CD8-positive, alpha-beta T cell (primary cell): ENCODE measurements at regions of chr10 and their contacts with region 1.

Region 1: GRCh38 chr10:102245101-102245931 is at the start of gene GBF1:
- DNase-seq: peak; percentile 75 to 98 (median 87)
- ATAC-seq: peak; percentile 84
- H3K4me3 ChIP-seq: peak within 1 kb of the TSS; percentile 82 to 95
- H3K4me3 Mint-ChIP-seq: peak within 1 kb of the TSS; percentile 94
- H3K27ac ChIP-seq: peak within 1 kb of the TSS; percentile 89 to 93
- H3K27ac Mint-ChIP-seq: peak within 1 kb of the TSS; percentile 92
- H3K4me1 ChIP-seq: peaks cover 44% of the 10 kb centered on the region
- H3K4me1 Mint-ChIP-seq: peaks cover 54% of the 10 kb centered on the region
- H3K27me3 ChIP-seq: peaks cover 10 to 22% of the 10 kb centered on the region in 2 experiments
- H3K27me3 Mint-ChIP-seq: peaks cover 19% of the 10 kb centered on the region
- CTCF ChIP-seq: no peak
- total RNA-seq, gene GBF1: 26.7 to 31.3 TPM

Region 2: DNA sequence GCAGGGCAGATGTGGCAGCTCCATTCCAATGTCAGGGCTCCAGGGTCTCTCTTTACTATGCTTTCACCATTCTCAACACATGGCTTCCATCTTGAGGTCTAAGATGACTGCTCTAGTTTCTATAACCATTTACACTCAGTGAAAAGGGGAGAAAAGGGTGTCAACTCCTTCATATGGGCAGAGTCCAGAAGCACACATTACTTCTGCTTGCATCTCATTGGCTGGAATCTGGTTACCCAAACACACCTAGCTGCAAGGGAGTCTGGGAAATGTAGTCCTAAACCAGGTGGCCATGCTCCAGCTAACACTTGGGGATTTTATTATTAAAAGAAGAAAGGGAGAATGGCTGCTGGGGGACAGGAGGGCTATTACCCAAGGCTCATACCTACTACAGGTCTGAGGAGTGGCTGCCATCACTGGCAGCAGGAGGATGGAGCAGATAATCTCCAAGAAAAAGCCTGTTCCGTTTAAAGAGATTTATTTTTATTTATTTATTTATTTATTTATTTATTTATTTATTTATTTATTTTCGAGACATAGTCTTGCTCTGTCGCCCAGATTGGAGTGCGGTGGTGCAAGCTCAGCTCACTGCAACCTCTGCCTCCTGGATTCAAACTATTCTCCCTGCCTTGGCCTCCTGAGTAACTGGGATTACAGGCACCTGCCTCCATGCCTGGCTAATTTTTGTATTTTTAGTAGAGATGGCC is 987.0 kb before region 1 on chr10:
- CTCF ChIA-PET with region 1: no interaction called
- POLR2A ChIA-PET with region 1: no interaction called
- intact Hi-C with region 1: no loop called
- DNase-seq: no peak
- ATAC-seq: no peak
- H3K4me3 ChIP-seq: no peak overlapping the region
- H3K4me3 Mint-ChIP-seq: no peak overlapping the region
- H3K27ac ChIP-seq: no peak overlapping the region
- H3K27ac Mint-ChIP-seq: no peak overlapping the region
- H3K4me1 ChIP-seq: no peaks in the 10 kb centered on the region
- H3K4me1 Mint-ChIP-seq: no peaks in the 10 kb centered on the region
- H3K27me3 ChIP-seq: peaks cover 3 to 4% of the 10 kb centered on the region in 2 experiments
- H3K27me3 Mint-ChIP-seq: peaks cover 49% of the 10 kb centered on the region
- CTCF ChIP-seq: no peak

Region 3: GRCh38 chr10:102120142-102120990 is 125.0 kb before region 1 on chr10 and contains the start of gene LDB1:
- CTCF ChIA-PET with region 1: no interaction called
- POLR2A ChIA-PET with region 1: no interaction called
- intact Hi-C with region 1: loop called in 1 of 2 experiments (anchors 1 kb)
- DNase-seq: peak; percentile 40 to 91 (median 70)
- ATAC-seq: peak; percentile 45
- H3K4me3 ChIP-seq: peak within 1 kb of the TSS; percentile 84 to 94
- H3K4me3 Mint-ChIP-seq: peak within 1 kb of the TSS; percentile 90
- H3K27ac ChIP-seq: peak within 1 kb of the TSS; percentile 97 to 98
- H3K27ac Mint-ChIP-seq: peak within 1 kb of the TSS; percentile 98
- H3K4me1 ChIP-seq: peaks cover 51% of the 10 kb centered on the region
- H3K4me1 Mint-ChIP-seq: peaks cover 55% of the 10 kb centered on the region
- H3K27me3 ChIP-seq: no peaks in the 10 kb centered on the region
- H3K27me3 Mint-ChIP-seq: no peaks in the 10 kb centered on the region
- CTCF ChIP-seq: no peak
- total RNA-seq, gene LDB1: 113 to 124 TPM

Region 4: DNA sequence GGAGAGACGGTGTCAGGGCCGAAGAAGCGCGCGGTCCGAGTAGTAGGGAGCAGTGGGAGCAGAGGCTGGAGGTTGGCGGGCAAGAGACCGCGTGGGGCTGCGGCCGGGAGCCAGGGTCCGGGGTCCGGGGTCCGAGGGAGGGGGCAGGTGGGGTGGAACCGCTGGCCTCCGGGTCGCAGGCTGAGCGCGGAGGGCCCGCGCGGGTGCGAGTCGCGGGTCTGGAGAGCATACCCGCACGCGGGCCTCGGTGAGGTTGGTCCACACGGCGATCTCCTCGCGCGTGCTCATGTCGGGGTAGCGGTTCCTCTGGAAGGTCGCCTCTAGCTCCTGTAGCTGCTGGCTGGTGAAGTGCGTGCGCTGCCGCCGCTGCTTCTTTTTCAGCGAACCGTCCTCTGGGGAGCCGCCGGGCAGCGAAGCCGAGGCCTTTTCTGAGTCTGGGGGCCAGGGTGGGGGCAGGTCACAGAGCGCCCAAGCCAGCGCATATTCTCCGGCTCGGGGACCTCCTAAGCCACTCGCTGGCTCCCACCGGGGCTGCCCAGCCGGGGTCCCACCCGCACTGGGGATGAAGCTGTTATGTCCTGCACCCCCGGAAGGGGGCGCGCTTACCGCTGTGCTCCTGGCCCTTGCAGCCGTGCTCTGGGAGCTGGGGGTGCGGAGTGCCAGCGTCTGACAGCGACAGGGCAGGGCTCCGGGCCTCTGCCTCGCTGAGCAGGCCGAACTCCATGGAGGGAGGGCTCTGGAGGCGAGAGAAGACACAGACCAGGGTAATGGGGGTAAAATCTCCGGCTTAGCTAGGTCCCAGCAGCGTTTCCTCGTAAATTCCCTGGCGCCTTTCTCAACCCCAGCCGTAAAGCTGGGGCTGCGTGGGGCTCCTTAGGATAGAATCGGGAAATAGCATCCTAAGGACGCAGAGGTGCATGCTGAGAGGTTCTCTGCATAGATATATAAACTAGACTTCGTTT is 13.7 kb before region 1 on chr10:
- CTCF ChIA-PET with region 1: interaction called, 92 read pairs
- POLR2A ChIA-PET with region 1: interaction called, 16 read pairs
- intact Hi-C with region 1: loop called in 1 of 2 experiments (anchors 1 kb)
- DNase-seq: peak in 8 of 9 experiments; percentile 34 to 81 (median 68)
- ATAC-seq: peak; percentile 74
- H3K4me3 ChIP-seq: peak overlapping the region; percentile 51
- H3K4me3 Mint-ChIP-seq: peak overlapping the region; percentile 79
- H3K27ac ChIP-seq: no peak overlapping the region
- H3K27ac Mint-ChIP-seq: no peak overlapping the region
- H3K4me1 ChIP-seq: peaks cover 18% of the 10 kb centered on the region
- H3K4me1 Mint-ChIP-seq: peaks cover 11% of the 10 kb centered on the region
- H3K27me3 ChIP-seq: peaks cover 20 to 21% of the 10 kb centered on the region in 2 experiments
- H3K27me3 Mint-ChIP-seq: peaks cover 54% of the 10 kb centered on the region
- CTCF ChIP-seq: peak; percentile 86